Endothelial cell of umbilical vein (primary cell): ENCODE measurements at regions of chr15 and their contacts with region 1.

Region 1: GRCh38 chr15:101641166-101641764 is 10.9 kb downstream of the TM2D3 start:
- DNase-seq: peak; percentile 82
- H3K4me3 ChIP-seq: no peak overlapping the region
- H3K27ac ChIP-seq: peak overlapping the region; percentile 93
- H3K4me1 ChIP-seq: peaks cover 23% of the 10 kb centered on the region
- H3K27me3 ChIP-seq: no peaks in the 10 kb centered on the region
- CTCF ChIP-seq: peak; percentile 81 to 82
- POLR2A ChIP-seq: no peak

Region 2: GRCh38 chr15:100602064-100602822 is 1039.0 kb before region 1 on chr15 and contains the starts of genes ASB7 and LINS1:
- CTCF ChIA-PET with region 1: no interaction called
- POLR2A ChIA-PET with region 1: no interaction called
- dilution Hi-C with region 1: no loop called
- intact Hi-C with region 1: loop called (anchors 2 kb)
- DNase-seq: peak; percentile 100
- H3K4me3 ChIP-seq: peak within 1 kb of the TSS; percentile 84 to 99 (median 96)
- H3K27ac ChIP-seq: peak within 1 kb of the TSS; percentile 71
- H3K4me1 ChIP-seq: peaks cover 21% of the 10 kb centered on the region
- H3K27me3 ChIP-seq: no peaks in the 10 kb centered on the region
- CTCF ChIP-seq: no peak
- POLR2A ChIP-seq: no peak
- total RNA-seq, gene ASB7: 13.0 and 13.3 TPM in 2 replicates
- total RNA-seq, gene LINS1: 9.6 and 14.7 TPM in 2 replicates

Region 3: GRCh38 chr15:101277038-101277882 is 364.0 kb before region 1 on chr15 and contains the start of gene SELENOS:
- CTCF ChIA-PET with region 1: interaction called, 7 read pairs
- POLR2A ChIA-PET with region 1: no interaction called
- dilution Hi-C with region 1: no loop called
- intact Hi-C with region 1: loop called (anchors 1 kb)
- DNase-seq: peak; percentile 89
- H3K4me3 ChIP-seq: peak within 1 kb of the TSS; percentile 63 to 98 (median 82)
- H3K27ac ChIP-seq: peak within 1 kb of the TSS; percentile 75
- H3K4me1 ChIP-seq: peaks cover 11% of the 10 kb centered on the region
- H3K27me3 ChIP-seq: no peaks in the 10 kb centered on the region
- CTCF ChIP-seq: no peak
- POLR2A ChIP-seq: peak; percentile 44
- total RNA-seq, gene SELENOS: 70.4 and 73.2 TPM in 2 replicates

Region 4: GRCh38 chr15:101294731-101295606 is 346.3 kb before region 1 on chr15 and contains the start of gene SNRPA1:
- CTCF ChIA-PET with region 1: interaction called, 82 read pairs
- POLR2A ChIA-PET with region 1: no interaction called
- dilution Hi-C with region 1: no loop called
- intact Hi-C with region 1: loop called (anchors 1 kb)
- DNase-seq: peak; percentile 95
- H3K4me3 ChIP-seq: peak within 1 kb of the TSS; percentile 77 to 94 (median 80)
- H3K27ac ChIP-seq: peak within 1 kb of the TSS; percentile 70
- H3K4me1 ChIP-seq: peaks cover 14% of the 10 kb centered on the region
- H3K27me3 ChIP-seq: no peaks in the 10 kb centered on the region
- CTCF ChIP-seq: no peak
- POLR2A ChIP-seq: peak; percentile 53
- total RNA-seq, gene SNRPA1: 80.8 and 82.7 TPM in 2 replicates

Region 5: GRCh38 chr15:101320501-101321052 is 320.7 kb before region 1 on chr15:
- CTCF ChIA-PET with region 1: interaction called, 23 read pairs
- POLR2A ChIA-PET with region 1: no interaction called
- dilution Hi-C with region 1: no loop called
- intact Hi-C with region 1: no loop called
- DNase-seq: peak; percentile 29
- H3K4me3 ChIP-seq: no peak overlapping the region
- H3K27ac ChIP-seq: no peak overlapping the region
- H3K4me1 ChIP-seq: no peaks in the 10 kb centered on the region
- H3K27me3 ChIP-seq: no peaks in the 10 kb centered on the region
- CTCF ChIP-seq: peak; percentile 40 to 43
- POLR2A ChIP-seq: no peak

Region 6: DNA sequence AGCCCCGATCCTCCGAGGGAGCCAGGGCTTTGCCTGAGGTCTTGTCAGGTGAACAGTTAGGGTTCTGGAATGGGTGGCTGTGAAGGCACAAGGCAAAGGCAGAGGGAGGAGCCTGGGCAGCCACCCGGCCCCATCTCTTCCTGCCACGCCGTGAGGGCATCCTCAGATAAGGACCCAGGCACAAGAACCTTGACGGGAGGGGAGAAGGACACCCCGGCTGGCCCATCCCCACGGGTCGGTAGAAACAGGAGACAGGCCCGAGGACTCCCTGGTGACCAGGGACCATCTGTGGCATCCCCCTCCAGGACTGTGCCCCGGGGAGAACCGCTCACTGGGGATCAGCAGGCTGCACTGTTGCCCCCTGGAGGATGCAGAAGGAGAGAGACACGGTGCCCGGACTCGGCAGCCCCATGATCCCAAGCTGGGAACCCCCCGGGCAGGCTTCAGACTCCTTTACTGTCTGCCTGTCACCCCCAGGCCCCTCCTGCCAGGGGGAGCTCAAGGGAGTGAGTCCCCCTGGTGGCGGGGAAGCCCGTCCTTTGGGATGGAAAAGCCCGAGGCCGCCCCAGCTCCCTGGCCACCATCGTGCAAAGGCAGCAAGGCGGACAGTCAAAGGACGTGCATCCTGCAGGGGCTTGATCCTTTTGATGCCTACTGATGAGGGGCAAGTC is 139.4 kb before region 1 on chr15:
- CTCF ChIA-PET with region 1: interaction called, 16 read pairs
- POLR2A ChIA-PET with region 1: interaction called, 5 read pairs
- dilution Hi-C with region 1: no loop called
- intact Hi-C with region 1: loop called (anchors 1 kb)
- DNase-seq: peak; percentile 34
- H3K4me3 ChIP-seq: no peak overlapping the region
- H3K27ac ChIP-seq: no peak overlapping the region
- H3K4me1 ChIP-seq: no peaks in the 10 kb centered on the region
- H3K27me3 ChIP-seq: no peaks in the 10 kb centered on the region
- CTCF ChIP-seq: peak; percentile 52 to 81
- POLR2A ChIP-seq: no peak

Region 7: DNA sequence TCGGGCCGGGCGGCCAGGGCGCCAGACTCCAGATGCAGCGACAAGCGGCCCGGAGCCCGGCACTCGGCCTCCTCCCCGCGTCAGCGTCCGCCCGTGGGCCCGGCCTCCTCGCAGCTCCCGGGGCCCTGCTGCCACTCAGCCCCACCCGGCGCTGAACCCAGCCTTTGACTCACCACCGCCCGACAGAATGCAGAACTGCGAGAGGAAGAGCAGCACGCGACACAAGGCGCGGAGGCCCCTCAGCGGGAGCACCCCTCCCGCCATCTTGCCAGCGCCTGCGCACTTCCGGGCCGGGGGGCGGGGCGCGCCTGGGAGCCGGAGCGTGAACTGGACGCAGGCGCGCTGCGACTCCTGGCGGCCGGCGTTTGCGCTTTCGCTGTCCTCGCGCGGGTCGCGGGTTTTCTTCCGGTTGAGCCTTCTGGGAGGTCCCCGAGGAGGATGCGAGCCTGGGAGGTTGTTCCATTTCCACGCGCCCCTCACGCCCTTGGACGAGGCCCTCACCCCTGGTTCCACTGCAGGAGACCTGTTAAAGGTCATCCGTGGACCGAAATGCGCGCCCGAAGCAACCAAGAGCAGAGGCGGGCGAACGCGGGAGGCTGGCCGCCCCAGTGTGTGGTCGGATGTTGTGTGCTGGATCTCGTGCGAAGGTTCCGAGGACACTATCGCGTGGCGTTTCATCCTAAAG is 11.0 kb after region 1 on chr15 and contains the start of gene TM2D3:
- CTCF ChIA-PET with region 1: interaction called, 9 read pairs
- POLR2A ChIA-PET with region 1: interaction called, 3 read pairs
- dilution Hi-C with region 1: no loop called
- intact Hi-C with region 1: loop called (anchors 1 kb)
- DNase-seq: peak; percentile 93
- H3K4me3 ChIP-seq: peak within 1 kb of the TSS; percentile 19 to 78 (median 60)
- H3K27ac ChIP-seq: peak within 1 kb of the TSS; percentile 74
- H3K4me1 ChIP-seq: peaks cover 19% of the 10 kb centered on the region
- H3K27me3 ChIP-seq: no peaks in the 10 kb centered on the region
- CTCF ChIP-seq: peak; percentile 81 to 83
- POLR2A ChIP-seq: peak; percentile 91
- total RNA-seq, gene TM2D3: 34.3 and 36.7 TPM in 2 replicates

Region 8: GRCh38 chr15:101828812-101829211 is 187.5 kb after region 1 on chr15:
- CTCF ChIA-PET with region 1: no interaction called
- POLR2A ChIA-PET with region 1: no interaction called
- dilution Hi-C with region 1: no loop called
- intact Hi-C with region 1: no loop called
- DNase-seq: no peak
- H3K4me3 ChIP-seq: no peak overlapping the region
- H3K27ac ChIP-seq: no peak overlapping the region
- H3K4me1 ChIP-seq: no peaks in the 10 kb centered on the region
- H3K27me3 ChIP-seq: no peaks in the 10 kb centered on the region
- CTCF ChIP-seq: no peak
- POLR2A ChIP-seq: no peak